ENCODE measurements at regions of chr1 and their contacts with region 1.

Region 1: DNA sequence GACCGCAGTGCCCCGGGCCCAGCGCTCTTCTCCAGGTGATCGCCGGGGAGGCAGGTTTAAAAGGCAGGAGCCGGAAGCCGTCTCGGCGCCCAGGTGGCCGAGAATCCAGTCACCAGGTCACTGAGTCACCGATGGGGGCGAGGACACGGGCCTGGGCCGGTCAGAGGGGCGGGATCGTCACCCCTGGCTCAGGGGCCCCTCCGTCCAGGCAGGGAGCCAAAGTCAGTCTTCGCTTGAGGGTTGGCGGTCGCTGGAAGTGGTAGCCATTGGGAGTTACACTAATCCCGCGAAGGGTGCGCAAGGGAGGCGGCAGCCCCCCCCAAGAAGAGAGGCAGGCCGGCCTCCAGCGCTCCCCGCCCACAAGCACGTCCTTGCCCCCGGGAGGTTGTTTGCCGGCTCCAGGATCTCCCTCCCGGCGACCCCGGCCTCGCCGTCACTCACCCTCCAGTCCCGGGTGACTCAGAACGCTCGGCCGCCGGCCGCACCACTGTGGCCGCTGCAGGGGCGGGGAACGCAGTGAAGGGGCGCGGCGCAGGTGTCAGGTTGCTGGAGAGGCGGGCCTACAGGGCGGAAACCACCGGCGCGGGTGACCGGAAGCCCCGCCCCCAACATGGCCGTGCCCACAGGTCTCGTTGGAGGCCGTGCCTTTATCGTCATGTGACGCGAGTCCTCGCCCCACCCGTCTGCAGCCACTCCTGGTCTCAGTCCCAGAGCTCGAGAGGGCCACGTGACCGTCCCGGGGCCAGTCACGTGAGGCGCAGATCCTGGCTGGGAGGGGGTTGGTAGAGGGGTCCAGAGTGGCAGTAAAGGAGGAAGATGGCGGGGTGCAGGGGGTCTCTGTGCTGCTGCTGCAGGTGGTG is at the starts of genes CLCN6 and MTHFR:
- DNase-seq: peak; percentile 100
- H3K4me3 ChIP-seq: peak within 1 kb of the TSS; percentile 80
- H3K27ac ChIP-seq: peak within 1 kb of the TSS; percentile 59
- H3K4me1 ChIP-seq: peaks cover 51% of the 10 kb centered on the region
- CTCF ChIP-seq: no peak
- total RNA-seq, gene CLCN6: 16.1 and 19.7 TPM in 2 replicates
- total RNA-seq, gene MTHFR: 31.3 and 31.6 TPM in 2 replicates

Region 2: GRCh38 chr1:11358984-11359383 is 446.7 kb before region 1 on chr1:
- CTCF ChIA-PET with region 1: interaction called, 10 read pairs
- POLR2A ChIA-PET with region 1: no interaction called
- intact Hi-C with region 1: no loop called
- DNase-seq: no peak
- H3K4me3 ChIP-seq: no peak overlapping the region
- H3K27ac ChIP-seq: no peak overlapping the region
- H3K4me1 ChIP-seq: no peaks in the 10 kb centered on the region
- CTCF ChIP-seq: no peak

Region 3: DNA sequence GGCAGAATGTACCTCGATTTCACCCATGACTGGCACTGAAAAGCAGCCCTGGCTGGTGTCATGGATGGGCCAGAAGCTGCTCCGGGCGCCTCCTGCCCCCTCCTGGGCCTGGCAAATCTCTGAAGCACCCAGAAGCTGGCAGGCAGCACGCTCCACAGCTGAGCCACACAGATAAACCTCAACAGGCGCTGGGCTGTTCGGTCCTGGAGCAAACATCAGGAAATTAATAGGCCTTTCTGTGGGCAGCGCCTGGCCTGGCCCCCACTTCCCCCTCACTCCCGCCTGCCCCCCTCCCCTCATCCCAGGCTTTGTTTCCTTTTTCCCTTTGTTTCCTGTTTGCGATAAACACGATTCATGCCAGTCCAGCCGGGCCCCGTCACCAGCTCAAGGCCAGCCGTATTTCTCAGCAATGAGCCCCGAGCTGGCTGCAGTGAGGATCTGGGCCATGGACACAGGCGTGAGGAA is 346.8 kb before region 1 on chr1:
- CTCF ChIA-PET with region 1: no interaction called
- POLR2A ChIA-PET with region 1: no interaction called
- intact Hi-C with region 1: no loop called
- DNase-seq: no peak
- H3K4me3 ChIP-seq: no peak overlapping the region
- H3K27ac ChIP-seq: no peak overlapping the region
- H3K4me1 ChIP-seq: no peaks in the 10 kb centered on the region
- CTCF ChIP-seq: no peak

Region 4: DNA sequence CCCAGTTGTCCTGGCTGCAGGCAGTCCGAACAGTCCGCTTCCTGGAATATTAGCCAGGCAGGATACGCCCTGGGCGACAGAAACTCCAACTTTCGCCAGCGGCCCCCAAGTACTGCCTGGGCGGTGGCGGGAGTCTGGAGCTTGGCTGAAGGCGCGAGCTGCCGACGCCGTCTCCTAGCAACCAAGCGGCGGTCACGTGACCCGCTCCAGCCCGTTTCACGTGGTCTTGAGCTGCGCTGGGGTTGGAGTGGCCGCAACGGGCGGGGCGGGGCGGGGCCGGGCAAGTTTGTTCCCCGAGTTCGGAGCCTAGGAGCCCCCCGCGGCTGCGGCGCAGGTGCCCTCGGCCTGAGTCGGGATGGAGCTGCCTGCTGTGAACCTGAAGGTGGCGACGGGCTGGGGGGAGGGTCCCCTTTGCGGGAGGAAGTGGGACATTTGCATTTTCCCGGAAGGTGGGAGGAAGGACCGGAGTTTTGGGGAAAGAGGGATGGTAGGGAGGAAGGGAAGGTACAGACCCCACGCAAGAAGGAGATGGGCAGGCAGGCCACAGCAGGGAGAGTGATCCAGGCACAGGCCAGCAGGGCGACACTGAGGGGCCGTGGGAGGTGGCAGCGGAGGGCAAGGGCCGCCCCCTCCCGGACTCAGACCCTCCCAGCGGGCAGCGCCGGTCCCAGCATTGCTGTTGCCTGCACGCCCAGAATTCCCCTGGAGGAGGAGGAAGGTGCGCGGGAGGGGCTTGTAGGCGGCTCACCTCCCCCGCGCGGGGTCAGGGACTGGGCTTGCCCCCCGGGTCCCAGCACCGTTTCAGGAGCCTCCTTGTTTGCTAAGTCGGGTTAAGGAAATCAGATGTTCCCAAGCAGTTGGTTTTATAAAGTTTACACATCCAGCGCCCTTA is 69.6 kb before region 1 on chr1 and contains the start of gene AGTRAP:
- CTCF ChIA-PET with region 1: interaction called, 5 read pairs
- POLR2A ChIA-PET with region 1: interaction called, 3 read pairs
- intact Hi-C with region 1: loop called (anchors 2 kb)
- DNase-seq: peak; percentile 93
- H3K4me3 ChIP-seq: peak within 1 kb of the TSS; percentile 81
- H3K27ac ChIP-seq: peak within 1 kb of the TSS; percentile 48
- H3K4me1 ChIP-seq: peaks cover 17% of the 10 kb centered on the region
- CTCF ChIP-seq: peak; percentile 31
- total RNA-seq, gene AGTRAP: 20.5 and 40.0 TPM in 2 replicates

Region 5: DNA sequence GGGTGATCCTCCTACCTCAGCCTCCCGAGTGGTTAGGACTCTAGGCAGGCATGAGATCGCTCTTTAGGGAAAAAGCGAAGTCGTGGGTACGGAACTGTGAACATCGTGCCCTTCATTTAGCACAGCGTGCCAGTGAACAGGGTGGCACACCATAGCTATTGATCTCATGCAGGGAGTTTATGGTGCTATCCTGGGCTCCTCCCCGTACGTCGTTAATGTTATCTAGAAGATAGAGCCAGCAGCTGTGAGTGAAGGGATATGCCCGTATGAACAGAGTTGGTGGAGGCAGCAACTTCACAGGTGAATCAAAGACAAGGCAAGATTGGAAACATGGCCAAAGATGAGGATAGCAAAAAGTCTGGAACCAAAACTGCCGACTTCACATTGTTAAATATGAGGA is 11.5 kb after region 1 on chr1:
- CTCF ChIA-PET with region 1: no interaction called
- POLR2A ChIA-PET with region 1: interaction called, 12 read pairs
- intact Hi-C with region 1: no loop called
- DNase-seq: no peak
- H3K4me3 ChIP-seq: no peak overlapping the region
- H3K27ac ChIP-seq: no peak overlapping the region
- H3K4me1 ChIP-seq: peaks cover 41% of the 10 kb centered on the region
- CTCF ChIP-seq: no peak